ENCODE measurements at regions of chr12 and their contacts with region 1.

Region 1: DNA sequence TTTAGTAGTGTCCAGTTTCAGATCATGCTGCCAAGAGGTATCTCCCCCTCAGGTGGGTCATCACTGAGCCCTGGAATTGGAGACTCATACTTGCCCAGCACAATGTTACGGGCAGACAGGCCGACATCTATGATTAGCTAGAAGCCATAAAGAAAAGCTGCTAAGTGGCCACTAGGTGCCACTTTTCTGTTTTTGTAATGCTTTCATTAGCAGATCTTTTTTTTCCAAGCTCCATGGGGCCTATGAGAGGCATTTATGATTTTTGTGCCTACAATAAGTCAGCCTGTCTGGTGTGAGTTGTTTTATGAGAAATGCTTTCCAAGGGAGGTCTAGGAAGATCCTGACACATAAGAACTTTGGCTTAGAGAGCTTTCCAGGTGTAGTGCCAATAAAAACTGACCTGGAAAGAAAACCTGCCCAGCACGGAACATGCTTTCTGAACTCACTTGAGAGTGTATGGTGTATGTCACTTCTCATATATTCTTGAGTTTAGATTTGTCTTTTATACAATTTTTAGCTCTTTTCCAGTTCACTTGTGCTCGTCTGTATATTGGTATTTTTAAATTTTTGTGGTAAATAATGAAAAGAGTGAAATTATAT is 21.8 kb upstream of the SMCO2 start:
- DNase-seq: peak in 1 of 2 experiments; percentile 51
- H3K4me3 ChIP-seq: no peak overlapping the region
- H3K4me3 Mint-ChIP-seq: no peak overlapping the region
- H3K27ac Mint-ChIP-seq: no peak overlapping the region
- H3K4me1 ChIP-seq: 0 out of 2 replicates have a peak, but pooled peaks cover 3% of the 10 kb centered on the region
- H3K4me1 Mint-ChIP-seq: peaks cover 22% of the 10 kb centered on the region
- H3K27me3 ChIP-seq: no peaks in the 10 kb centered on the region
- H3K27me3 Mint-ChIP-seq: no peaks in the 10 kb centered on the region
- CTCF ChIP-seq: peak; percentile 74 to 79

Region 2: GRCh38 chr12:27176787-27177186 is 247.9 kb before region 1 on chr12:
- CTCF ChIA-PET with region 1: no interaction called
- POLR2A ChIA-PET with region 1: no interaction called
- intact Hi-C with region 1: no loop called
- DNase-seq: no peak
- H3K4me3 ChIP-seq: no peak overlapping the region
- H3K4me3 Mint-ChIP-seq: no peak overlapping the region
- H3K27ac Mint-ChIP-seq: no peak overlapping the region
- H3K4me1 ChIP-seq: peaks cover 24% of the 10 kb centered on the region
- H3K4me1 Mint-ChIP-seq: peaks cover 25% of the 10 kb centered on the region
- H3K27me3 ChIP-seq: no peaks in the 10 kb centered on the region
- H3K27me3 Mint-ChIP-seq: no peaks in the 10 kb centered on the region
- CTCF ChIP-seq: no peak

Region 3: DNA sequence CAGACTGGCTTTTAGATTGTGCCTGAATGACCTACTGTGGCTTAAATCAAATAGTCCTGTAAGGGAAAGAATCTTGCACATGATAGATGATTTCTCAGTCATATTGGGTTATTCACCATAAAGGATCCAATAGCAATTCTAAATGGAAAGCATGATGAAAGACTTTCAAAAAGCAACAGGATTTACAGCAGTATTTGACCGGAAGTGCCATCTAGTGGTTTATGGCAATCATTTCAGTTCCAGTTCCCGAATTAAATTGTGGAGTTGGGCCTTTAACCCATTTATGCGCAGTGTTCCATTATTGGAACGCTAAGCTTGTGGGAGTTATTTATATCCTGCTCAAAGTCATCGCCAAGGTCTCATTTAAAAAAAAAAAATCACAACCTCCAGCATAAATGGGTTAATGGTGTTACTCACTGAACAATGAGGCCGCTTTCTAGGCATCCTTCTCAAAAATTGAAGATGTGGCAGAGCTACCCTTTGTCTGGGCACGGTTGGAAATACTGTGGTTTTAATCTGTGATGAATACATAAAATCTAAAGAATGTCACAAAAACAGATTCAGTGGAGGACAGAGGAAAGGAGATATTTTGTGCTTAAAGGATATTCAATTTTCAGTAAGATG is 210.7 kb after region 1 on chr12:
- CTCF ChIA-PET with region 1: no interaction called
- POLR2A ChIA-PET with region 1: no interaction called
- intact Hi-C with region 1: loop called (anchors 1 kb)
- DNase-seq: peak in 1 of 2 experiments; percentile 55
- H3K4me3 ChIP-seq: no peak overlapping the region
- H3K4me3 Mint-ChIP-seq: no peak overlapping the region
- H3K27ac Mint-ChIP-seq: no peak overlapping the region
- H3K4me1 ChIP-seq: peaks cover 4% of the 10 kb centered on the region; the same call in 1 of the 2 replicates
- H3K4me1 Mint-ChIP-seq: peaks cover 28% of the 10 kb centered on the region
- H3K27me3 ChIP-seq: no peaks in the 10 kb centered on the region
- H3K27me3 Mint-ChIP-seq: no peaks in the 10 kb centered on the region
- CTCF ChIP-seq: peak; percentile 69 to 83

Region 4: GRCh38 chr12:27652174-27652763 is 227.5 kb after region 1 on chr12:
- CTCF ChIA-PET with region 1: interaction called, 3 read pairs
- POLR2A ChIA-PET with region 1: no interaction called
- intact Hi-C with region 1: loop called (anchors 1 kb)
- DNase-seq: peak; percentile 69 to 88
- H3K4me3 ChIP-seq: no peak overlapping the region
- H3K4me3 Mint-ChIP-seq: no peak overlapping the region
- H3K27ac Mint-ChIP-seq: no peak overlapping the region
- H3K4me1 ChIP-seq: no peaks in the 10 kb centered on the region
- H3K4me1 Mint-ChIP-seq: peaks cover 12% of the 10 kb centered on the region
- H3K27me3 ChIP-seq: no peaks in the 10 kb centered on the region
- H3K27me3 Mint-ChIP-seq: no peaks in the 10 kb centered on the region
- CTCF ChIP-seq: peak; percentile 91 to 96

Region 5: GRCh38 chr12:27703710-27704452 is 279.1 kb after region 1 on chr12:
- CTCF ChIA-PET with region 1: interaction called, 3 read pairs
- POLR2A ChIA-PET with region 1: no interaction called
- intact Hi-C with region 1: loop called (anchors 1 kb)
- DNase-seq: peak; percentile 86 to 92
- H3K4me3 ChIP-seq: no peak overlapping the region
- H3K4me3 Mint-ChIP-seq: no peak overlapping the region
- H3K27ac Mint-ChIP-seq: peak overlapping the region; percentile 72
- H3K4me1 ChIP-seq: no peaks in the 10 kb centered on the region
- H3K4me1 Mint-ChIP-seq: no peaks in the 10 kb centered on the region
- H3K27me3 ChIP-seq: no peaks in the 10 kb centered on the region
- H3K27me3 Mint-ChIP-seq: no peaks in the 10 kb centered on the region
- CTCF ChIP-seq: peak; percentile 93 to 95